ENCODE measurements at regions of chr5 and their contacts with region 1.

Region 1: GRCh38 chr5:90606539-90606938 is 47.9 kb downstream of the ADGRV1 start:
- DNase-seq: peak; percentile 26
- ATAC-seq: peak; percentile 74
- H3K4me3 ChIP-seq: no peak overlapping the region
- H3K27ac ChIP-seq: no peak overlapping the region
- H3K4me1 ChIP-seq: peaks cover 0 to 5% of the 10 kb centered on the region in 2 experiments; a peak in 2 of 4 replicates
- H3K27me3 ChIP-seq: no peaks in the 10 kb centered on the region
- CTCF ChIP-seq: peak; percentile 35 to 70 (median 67); a peak in 5 of 6 replicates
- POLR2A ChIP-seq: no peak
- RAD21 ChIP-seq: peak; percentile 55

Region 2: DNA sequence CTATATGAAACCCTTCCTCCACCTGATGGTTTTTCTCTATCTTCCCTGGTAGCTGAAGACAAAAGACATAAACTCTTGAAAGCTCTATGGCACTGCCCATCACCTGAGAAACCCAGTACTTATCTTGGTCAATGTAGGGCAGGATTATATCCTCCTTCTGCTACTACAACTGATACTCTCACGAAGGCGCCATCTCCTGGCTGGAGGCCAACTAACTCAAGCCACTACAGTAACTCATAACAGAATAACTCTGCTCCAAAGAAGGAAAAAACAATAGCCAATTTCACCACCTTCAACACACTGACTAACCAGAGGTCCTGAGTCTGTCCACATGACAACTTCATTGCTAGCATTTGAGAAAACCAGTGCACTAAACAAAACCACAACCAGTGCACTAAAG is 606.2 kb before region 1 on chr5:
- CTCF ChIA-PET with region 1: no interaction called
- POLR2A ChIA-PET with region 1: no interaction called
- RAD21 ChIA-PET with region 1: no interaction called
- intact Hi-C with region 1: no loop called
- DNase-seq: no peak
- ATAC-seq: no peak
- H3K4me3 ChIP-seq: no peak overlapping the region
- H3K27ac ChIP-seq: no peak overlapping the region
- H3K4me1 ChIP-seq: no peaks in the 10 kb centered on the region
- H3K27me3 ChIP-seq: no peaks in the 10 kb centered on the region
- CTCF ChIP-seq: no peak
- POLR2A ChIP-seq: no peak
- RAD21 ChIP-seq: no peak

Region 3: GRCh38 chr5:90434116-90434714 is 172.3 kb before region 1 on chr5:
- CTCF ChIA-PET with region 1: interaction called, 27 read pairs
- POLR2A ChIA-PET with region 1: no interaction called
- RAD21 ChIA-PET with region 1: interaction called in 1 of 2 experiments, 5 read pairs
- intact Hi-C with region 1: loop called (anchors 5 kb)
- DNase-seq: peak; percentile 31
- ATAC-seq: peak; percentile 88
- H3K4me3 ChIP-seq: no peak overlapping the region
- H3K27ac ChIP-seq: no peak overlapping the region
- H3K4me1 ChIP-seq: no peaks in the 10 kb centered on the region
- H3K27me3 ChIP-seq: no peaks in the 10 kb centered on the region
- CTCF ChIP-seq: peak; percentile 37 to 85 (median 81); a peak in 5 of 6 replicates
- POLR2A ChIP-seq: no peak
- RAD21 ChIP-seq: peak; percentile 74

Region 4: GRCh38 chr5:90440644-90441043 is 165.9 kb before region 1 on chr5:
- CTCF ChIA-PET with region 1: interaction called, 27 read pairs
- POLR2A ChIA-PET with region 1: no interaction called
- RAD21 ChIA-PET with region 1: interaction called in 1 of 2 experiments, 5 read pairs
- intact Hi-C with region 1: loop called (anchors 5 kb)
- DNase-seq: no peak
- ATAC-seq: no peak
- H3K4me3 ChIP-seq: no peak overlapping the region
- H3K27ac ChIP-seq: no peak overlapping the region
- H3K4me1 ChIP-seq: no peaks in the 10 kb centered on the region; a peak in 1 of 4 replicates
- H3K27me3 ChIP-seq: no peaks in the 10 kb centered on the region
- CTCF ChIP-seq: no peak
- POLR2A ChIP-seq: no peak
- RAD21 ChIP-seq: no peak

Region 5: DNA sequence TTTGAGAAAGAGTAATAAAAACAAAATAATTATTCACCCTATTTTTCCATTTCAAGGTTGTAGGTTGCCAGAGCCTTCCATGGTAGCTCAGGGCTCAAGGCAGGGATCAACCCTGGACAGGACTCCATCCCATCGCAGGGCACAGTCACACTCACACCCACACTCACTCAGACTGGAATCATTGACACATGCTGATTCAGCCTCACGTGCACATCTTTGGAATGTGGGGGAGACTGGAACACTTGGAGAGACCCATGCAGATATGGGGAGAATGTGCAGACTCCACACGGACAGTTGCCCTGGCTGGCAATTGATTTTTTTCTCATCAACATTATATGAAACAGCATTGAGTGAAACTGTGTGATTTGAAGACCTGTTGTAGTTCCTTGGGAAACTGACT is 186.2 kb after region 1 on chr5:
- CTCF ChIA-PET with region 1: no interaction called
- POLR2A ChIA-PET with region 1: no interaction called
- RAD21 ChIA-PET with region 1: no interaction called
- intact Hi-C with region 1: no loop called
- DNase-seq: no peak
- ATAC-seq: no peak; the same call in 1 of the 2 replicates
- H3K4me3 ChIP-seq: no peak overlapping the region
- H3K27ac ChIP-seq: no peak overlapping the region
- H3K4me1 ChIP-seq: peaks cover 0 to 4% of the 10 kb centered on the region in 2 experiments; a peak in 1 of 4 replicates
- H3K27me3 ChIP-seq: no peaks in the 10 kb centered on the region
- CTCF ChIP-seq: no peak
- POLR2A ChIP-seq: no peak
- RAD21 ChIP-seq: no peak

Measured in HCT116 (cell line).